PC-3 (cell line): ENCODE measurements at regions of chr19 and their contacts with region 1.

Region 1: GRCh38 chr19:15248648-15249527 is 16.6 kb upstream of the EPHX3 start:
- DNase-seq: peak; percentile 84
- ATAC-seq: peak; percentile 88
- H3K4me3 ChIP-seq: no peak overlapping the region
- H3K27ac ChIP-seq: peak overlapping the region; percentile 35
- H3K4me1 ChIP-seq: peaks cover 31% of the 10 kb centered on the region
- H3K27me3 ChIP-seq: no peaks in the 10 kb centered on the region
- CTCF ChIP-seq: no peak; the same call in none of the 2 replicates

Region 2: GRCh38 chr19:14718522-14719113 is 530.3 kb before region 1 on chr19:
- CTCF ChIA-PET with region 1: no interaction called
- POLR2A ChIA-PET with region 1: no interaction called
- intact Hi-C with region 1: no loop called
- DNase-seq: no peak
- ATAC-seq: no peak
- H3K4me3 ChIP-seq: no peak overlapping the region
- H3K27ac ChIP-seq: no peak overlapping the region
- H3K4me1 ChIP-seq: no peaks in the 10 kb centered on the region
- H3K27me3 ChIP-seq: no peaks in the 10 kb centered on the region
- CTCF ChIP-seq: no peak

Region 3: GRCh38 chr19:15161028-15161989 is 87.6 kb before region 1 on chr19:
- CTCF ChIA-PET with region 1: no interaction called
- POLR2A ChIA-PET with region 1: interaction called, 17 read pairs
- intact Hi-C with region 1: no loop called
- DNase-seq: peak; percentile 51
- ATAC-seq: no peak
- H3K4me3 ChIP-seq: no peak overlapping the region
- H3K27ac ChIP-seq: no peak overlapping the region
- H3K4me1 ChIP-seq: no peaks in the 10 kb centered on the region
- H3K27me3 ChIP-seq: no peaks in the 10 kb centered on the region
- CTCF ChIP-seq: peak; percentile 79

Region 4: GRCh38 chr19:15177269-15178116 is 71.4 kb before region 1 on chr19:
- CTCF ChIA-PET with region 1: no interaction called
- POLR2A ChIA-PET with region 1: no interaction called
- intact Hi-C with region 1: loop called (anchors 5 kb)
- DNase-seq: peak; percentile 86
- ATAC-seq: peak; percentile 87
- H3K4me3 ChIP-seq: peak overlapping the region; percentile 49; the same call in 1 of the 2 replicates
- H3K27ac ChIP-seq: no peak overlapping the region
- H3K4me1 ChIP-seq: no peaks in the 10 kb centered on the region; the same call in 1 of the 2 replicates
- H3K27me3 ChIP-seq: no peaks in the 10 kb centered on the region
- CTCF ChIP-seq: peak; percentile 84

Region 5: GRCh38 chr19:15234043-15234873 is 14.6 kb before region 1 on chr19:
- CTCF ChIA-PET with region 1: no interaction called
- POLR2A ChIA-PET with region 1: no interaction called
- intact Hi-C with region 1: no loop called
- DNase-seq: peak; percentile 93
- ATAC-seq: peak; percentile 80
- H3K4me3 ChIP-seq: no peak overlapping the region
- H3K27ac ChIP-seq: peak overlapping the region; percentile 92
- H3K4me1 ChIP-seq: peaks cover 22% of the 10 kb centered on the region
- H3K27me3 ChIP-seq: no peaks in the 10 kb centered on the region
- CTCF ChIP-seq: no peak